HEK293 (cell line): ENCODE measurements at regions of chr12 and their contacts with region 1.

Region 1: DNA sequence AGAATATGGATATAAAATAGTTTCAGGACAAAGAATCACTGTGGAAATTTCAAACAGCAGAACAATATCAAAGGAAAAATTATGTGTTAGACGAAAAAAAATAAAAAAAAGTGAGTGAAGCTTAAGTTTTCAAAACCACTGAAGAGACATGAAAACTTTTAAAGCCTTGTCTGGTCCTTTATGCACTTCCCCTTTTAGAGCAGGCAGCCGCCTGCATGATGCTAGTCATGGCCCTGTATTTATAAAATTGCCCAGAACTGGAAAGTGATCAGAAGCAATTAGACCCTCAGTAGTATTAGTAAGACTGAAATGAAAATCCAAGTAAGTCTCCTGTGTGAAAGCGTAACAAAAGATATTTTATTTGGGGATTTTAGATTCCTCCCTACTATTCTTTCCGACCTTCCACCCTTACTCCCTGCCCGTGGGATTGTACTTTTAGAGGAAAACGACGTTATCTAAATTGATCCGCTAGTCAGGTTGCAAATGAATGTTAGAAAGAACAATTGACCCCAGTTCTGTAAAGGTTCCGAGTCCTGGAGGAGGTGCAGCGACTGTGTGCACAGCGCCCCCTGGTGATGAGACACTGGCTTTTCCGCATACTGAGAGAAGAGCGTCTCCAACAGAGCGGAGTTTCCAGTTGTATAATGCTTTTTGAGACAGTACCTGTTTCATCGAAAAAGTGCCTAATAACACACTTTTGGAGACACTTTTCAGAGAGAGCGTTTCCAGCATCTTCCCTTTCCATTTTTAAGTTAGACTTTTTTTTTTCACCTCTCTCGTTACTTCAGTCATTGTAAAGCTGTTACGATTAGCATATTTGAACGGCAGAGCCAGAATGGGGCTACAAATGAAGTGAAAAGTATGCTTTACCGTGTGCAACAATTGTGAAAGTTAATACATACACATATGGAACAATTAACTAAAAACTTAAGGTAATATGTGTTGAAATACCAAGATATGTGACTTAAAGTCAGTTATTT is 12.4 kb downstream of the MGST1 start:
- H3K4me3 ChIP-seq: no peak overlapping the region
- H3K27ac ChIP-seq: no peak overlapping the region
- H3K4me1 ChIP-seq: no peaks in the 10 kb centered on the region
- CTCF ChIP-seq: 0 out of 2 replicates have a peak, but pooled peaks have one; percentile 20

Region 2: DNA sequence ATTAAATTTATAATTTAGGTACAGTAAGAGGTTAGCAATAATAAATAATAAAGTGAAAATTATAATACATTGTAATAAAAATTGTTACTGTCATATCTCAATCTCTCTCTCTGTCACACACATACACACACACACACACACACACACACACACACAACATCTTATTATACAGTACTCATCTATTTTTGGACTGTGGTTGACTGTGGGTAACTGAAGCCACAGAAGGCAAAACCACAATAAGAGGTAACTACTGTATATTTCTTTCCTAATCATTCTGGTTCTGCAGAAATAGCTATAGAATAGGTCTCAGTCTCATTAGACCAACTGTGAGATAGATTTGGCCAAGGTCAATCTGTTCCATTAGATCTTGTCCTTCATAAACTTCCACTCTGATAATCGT is 1070.6 kb before region 1 on chr12:
- CTCF ChIA-PET with region 1: no interaction called
- POLR2A ChIA-PET with region 1: no interaction called
- H3K4me3 ChIP-seq: no peak overlapping the region
- H3K27ac ChIP-seq: no peak overlapping the region
- H3K4me1 ChIP-seq: no peaks in the 10 kb centered on the region
- CTCF ChIP-seq: no peak

Region 3: DNA sequence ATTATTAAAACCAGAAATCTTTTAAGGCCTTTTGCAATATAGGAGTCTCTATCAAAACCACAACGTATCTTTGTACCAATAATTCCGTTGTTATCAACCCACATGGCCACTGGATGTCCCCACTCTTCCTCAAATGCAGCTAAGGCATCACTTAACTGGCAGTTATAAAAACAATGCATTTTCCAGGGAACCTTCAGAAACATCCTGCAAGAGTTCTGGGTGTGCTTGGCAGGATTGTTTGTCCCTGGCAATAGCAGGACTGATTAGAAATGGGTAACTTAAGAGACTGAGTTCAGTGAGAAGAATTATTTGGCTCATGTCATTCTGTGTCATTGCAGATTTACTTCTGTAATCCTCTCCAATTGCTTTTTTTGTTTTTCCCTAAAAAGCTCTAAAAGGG is 194.3 kb before region 1 on chr12:
- CTCF ChIA-PET with region 1: interaction called, 13 read pairs
- POLR2A ChIA-PET with region 1: no interaction called
- H3K4me3 ChIP-seq: no peak overlapping the region
- H3K27ac ChIP-seq: no peak overlapping the region
- H3K4me1 ChIP-seq: no peaks in the 10 kb centered on the region
- CTCF ChIP-seq: 0 out of 2 replicates have a peak, but pooled peaks have one; percentile 12

Region 4: DNA sequence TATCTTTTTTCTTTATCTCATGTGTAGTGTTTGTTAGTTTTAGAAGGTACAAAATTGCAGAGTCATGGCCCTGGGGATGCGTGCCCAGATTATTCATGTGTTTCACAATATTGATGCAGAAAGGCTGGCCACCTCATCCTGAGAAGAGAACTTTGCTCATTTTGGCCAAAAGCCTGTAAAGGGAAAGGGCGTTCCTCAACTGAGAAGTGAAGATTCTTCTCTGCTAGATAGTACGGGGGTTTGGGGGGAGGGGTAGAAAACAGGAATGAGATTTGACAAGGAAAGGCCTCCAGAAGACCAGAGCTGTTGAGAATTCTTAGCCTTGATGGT is 10.7 kb before region 1 on chr12:
- CTCF ChIA-PET with region 1: interaction called, 18 read pairs
- POLR2A ChIA-PET with region 1: no interaction called
- H3K4me3 ChIP-seq: no peak overlapping the region
- H3K27ac ChIP-seq: no peak overlapping the region
- H3K4me1 ChIP-seq: no peaks in the 10 kb centered on the region
- CTCF ChIP-seq: no peak

Region 5: GRCh38 chr12:16370096-16370495 is 10.3 kb after region 1 on chr12:
- CTCF ChIA-PET with region 1: no interaction called
- POLR2A ChIA-PET with region 1: no interaction called
- H3K4me3 ChIP-seq: no peak overlapping the region
- H3K27ac ChIP-seq: no peak overlapping the region
- H3K4me1 ChIP-seq: no peaks in the 10 kb centered on the region
- CTCF ChIP-seq: no peak